Activated CD4-positive, alpha-beta T cell treated with anti-CD3 and anti-CD28 coated beads for 36 hours (primary cell): ENCODE measurements at regions of chr12 and their contacts with region 1.

Region 1: DNA sequence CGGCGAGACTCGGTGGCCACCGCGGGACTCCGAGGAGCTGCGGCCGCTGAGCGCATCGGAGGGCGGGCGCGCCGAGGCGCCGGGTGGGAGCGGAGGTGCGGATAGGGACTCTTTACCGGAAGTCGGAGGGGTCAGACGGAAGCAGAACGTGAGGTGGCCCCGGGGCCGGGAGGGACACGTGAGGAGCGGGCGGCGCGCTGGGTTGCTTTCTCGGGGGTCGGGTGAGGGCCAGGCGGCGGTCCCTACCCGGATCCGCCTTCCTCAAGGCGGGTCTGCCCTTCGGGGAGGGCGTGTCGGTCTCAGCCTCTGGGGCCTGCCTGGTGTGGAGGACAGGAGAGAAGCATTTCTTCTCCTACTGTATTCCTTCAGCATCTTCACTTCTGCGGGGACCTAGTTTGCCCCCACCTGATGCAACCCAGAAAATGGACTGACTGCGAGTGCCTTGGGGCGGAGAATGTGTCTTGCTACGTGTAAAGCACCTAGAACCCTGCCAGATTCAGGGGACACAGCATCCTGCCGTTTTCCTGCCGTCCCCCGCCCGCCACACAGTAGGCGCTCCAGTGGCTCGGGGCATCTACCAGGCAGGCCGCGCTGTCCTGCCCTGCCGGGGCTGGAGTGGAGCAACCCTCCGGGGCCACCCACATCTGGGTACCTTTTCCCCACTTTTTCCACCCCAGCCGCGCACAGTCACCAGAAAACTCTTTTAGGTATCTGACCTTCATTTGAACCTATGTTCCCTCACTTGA is 517 bp upstream of the ATXN2 start:
- DNase-seq: peak; percentile 91
- ATAC-seq: peak; percentile 83
- H3K4me3 Mint-ChIP-seq: peak overlapping the region; percentile 81
- H3K27ac Mint-ChIP-seq: peak overlapping the region; percentile 92
- H3K4me1 Mint-ChIP-seq: peaks cover 17% of the 10 kb centered on the region
- H3K27me3 Mint-ChIP-seq: no peaks in the 10 kb centered on the region

Region 2: GRCh38 chr12:111546758-111547383 is 52.8 kb before region 1 on chr12:
- CTCF ChIA-PET with region 1: interaction called, 4 read pairs
- POLR2A ChIA-PET with region 1: no interaction called
- intact Hi-C with region 1: loop called (anchors 1 to 5 kb)
- DNase-seq: peak; percentile 57
- ATAC-seq: peak; percentile 90
- H3K4me3 Mint-ChIP-seq: peak overlapping the region; percentile 13
- H3K27ac Mint-ChIP-seq: peak overlapping the region; percentile 81
- H3K4me1 Mint-ChIP-seq: peaks cover 28% of the 10 kb centered on the region
- H3K27me3 Mint-ChIP-seq: no peaks in the 10 kb centered on the region

Region 3: DNA sequence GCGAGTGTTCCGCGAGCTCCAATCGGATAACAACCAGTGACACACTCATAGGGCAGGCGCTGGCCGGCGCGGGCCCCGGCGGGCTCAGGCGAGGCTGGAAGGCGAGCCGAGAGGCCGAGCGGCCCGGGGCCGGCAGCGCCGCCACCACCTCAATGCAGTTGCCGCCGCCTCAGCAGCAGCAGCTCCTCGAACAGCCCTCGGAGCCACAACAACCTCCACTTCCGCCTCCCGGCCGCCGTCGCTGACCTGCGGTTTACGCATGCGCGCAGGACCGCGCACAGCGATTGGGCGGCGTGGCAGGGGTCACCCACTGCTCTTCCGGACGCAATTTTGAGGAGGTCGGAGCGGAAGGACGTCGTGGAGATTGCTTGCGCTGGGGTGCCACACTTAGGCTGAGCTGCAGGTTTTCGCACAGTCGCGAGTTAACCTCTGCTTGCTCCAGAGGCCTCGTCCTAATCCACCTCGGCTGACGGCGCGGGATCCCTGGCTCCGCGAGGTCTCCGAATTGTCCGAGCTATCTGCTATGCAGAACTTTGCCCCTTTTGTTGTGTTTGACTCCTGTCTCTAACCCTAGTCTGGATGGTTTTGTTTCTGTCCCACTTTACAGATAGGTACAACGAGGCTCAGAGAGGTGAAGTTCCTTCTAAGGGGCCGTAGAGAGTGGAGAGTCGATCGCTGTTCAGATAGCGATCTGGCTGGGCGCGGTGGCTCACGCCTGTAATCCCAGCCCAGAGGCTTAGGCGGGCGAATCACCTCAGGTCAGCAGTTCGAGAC is 86.3 kb after region 1 on chr12 and contains the starts of genes ACAD10 and BRAP:
- CTCF ChIA-PET with region 1: no interaction called
- POLR2A ChIA-PET with region 1: no interaction called
- intact Hi-C with region 1: loop called (anchors 1 to 5 kb)
- DNase-seq: peak; percentile 95
- ATAC-seq: peak; percentile 97
- H3K4me3 Mint-ChIP-seq: peak within 1 kb of the TSS; percentile 89
- H3K27ac Mint-ChIP-seq: peak within 1 kb of the TSS; percentile 91
- H3K4me1 Mint-ChIP-seq: peaks cover 31% of the 10 kb centered on the region
- H3K27me3 Mint-ChIP-seq: no peaks in the 10 kb centered on the region
- total RNA-seq, gene ACAD10: 25.5 to 27.5 TPM
- total RNA-seq, gene BRAP: 18.3 to 23.6 TPM